ENCODE measurements at regions of chr9 and their contacts with region 1.

Region 1: DNA sequence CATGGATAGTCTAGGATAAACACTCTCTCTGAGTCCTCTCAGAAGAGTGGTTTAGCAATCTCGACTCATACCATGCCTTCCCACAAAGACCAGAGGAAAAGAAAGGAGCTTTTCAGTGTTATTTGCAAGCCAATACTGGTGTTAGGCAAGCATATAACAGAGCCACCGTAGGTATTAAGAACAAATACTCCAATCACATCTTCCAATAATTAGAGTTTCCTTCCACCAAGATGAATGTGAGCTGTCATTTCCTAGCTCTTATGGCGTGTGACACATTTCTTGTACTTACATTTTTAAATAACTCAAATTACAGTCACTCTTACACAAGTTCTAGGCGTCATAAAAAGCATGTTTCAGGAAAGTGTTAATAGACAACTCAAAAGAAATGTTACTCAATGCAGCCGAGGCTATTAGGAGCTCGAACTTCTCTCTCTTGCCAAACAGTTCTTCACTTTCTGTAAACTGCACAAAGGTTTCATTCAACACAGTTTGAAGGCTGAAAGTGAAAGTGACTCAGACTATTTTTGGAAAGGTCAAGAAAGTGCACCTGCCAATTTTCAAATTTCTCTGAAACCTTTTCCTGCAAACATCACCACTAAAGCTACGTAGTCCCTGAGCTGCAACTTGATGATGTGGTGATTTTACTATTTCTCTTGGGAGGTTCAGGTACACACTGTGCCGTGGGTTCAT is 153.8 kb downstream of the AUH start:
- DNase-seq: no peak
- H3K4me3 Mint-ChIP-seq: peak overlapping the region; percentile 68
- H3K27ac Mint-ChIP-seq: peak overlapping the region; percentile 95
- H3K4me1 Mint-ChIP-seq: peaks cover 59% of the 10 kb centered on the region
- H3K27me3 Mint-ChIP-seq: no peaks in the 10 kb centered on the region

Region 2: GRCh38 chr9:91101611-91102168 is 106.2 kb before region 1 on chr9:
- intact Hi-C with region 1: loop called (anchors 1 kb)
- DNase-seq: peak; percentile 85
- H3K4me3 Mint-ChIP-seq: peak overlapping the region; percentile 53
- H3K27ac Mint-ChIP-seq: peak overlapping the region; percentile 85
- H3K4me1 Mint-ChIP-seq: peaks cover 72% of the 10 kb centered on the region
- H3K27me3 Mint-ChIP-seq: peaks cover 8% of the 10 kb centered on the region

Region 3: DNA sequence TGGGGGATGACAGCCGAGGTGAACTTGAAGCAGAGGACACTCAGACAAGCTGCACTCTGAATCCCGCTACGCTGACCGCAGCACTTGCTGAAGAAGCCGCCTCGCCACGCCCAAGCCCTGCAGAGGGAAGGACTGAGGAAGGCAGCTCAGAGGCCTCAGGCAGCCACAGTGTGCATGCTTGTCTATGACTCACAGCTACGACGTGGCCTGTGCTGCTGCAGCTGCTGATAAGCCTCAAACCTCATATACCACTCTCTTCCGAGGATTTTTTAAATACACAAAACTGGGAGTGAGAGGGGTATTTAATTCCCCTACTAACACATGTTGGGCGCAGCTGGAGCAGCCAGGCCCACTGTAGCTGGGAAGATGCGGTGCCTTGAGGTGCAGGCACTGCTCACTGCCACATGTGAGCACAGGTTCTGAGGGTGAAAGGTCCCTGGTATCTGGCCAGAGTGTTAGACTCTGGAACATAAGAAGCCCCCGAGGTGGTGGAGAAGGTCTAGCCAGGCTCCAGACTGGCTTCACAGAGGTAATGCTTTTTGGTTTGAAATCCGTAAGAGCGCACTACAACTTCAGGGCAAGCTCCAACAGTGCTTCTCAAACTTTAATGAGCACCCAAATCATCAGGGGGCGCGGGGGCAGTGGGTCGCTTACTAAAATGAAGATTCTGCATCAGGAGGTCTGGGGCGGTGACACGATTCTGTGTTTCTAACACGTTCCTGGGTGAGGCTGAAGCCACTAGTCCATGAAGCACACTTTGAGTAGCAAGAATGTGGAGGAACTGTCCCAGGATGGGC is 43.0 kb before region 1 on chr9:
- intact Hi-C with region 1: loop called (anchors 1 kb)
- DNase-seq: peak; percentile 74
- H3K4me3 Mint-ChIP-seq: peak overlapping the region; percentile 82
- H3K27ac Mint-ChIP-seq: peak overlapping the region; percentile 98
- H3K4me1 Mint-ChIP-seq: peaks cover 62% of the 10 kb centered on the region
- H3K27me3 Mint-ChIP-seq: no peaks in the 10 kb centered on the region

Region 4: DNA sequence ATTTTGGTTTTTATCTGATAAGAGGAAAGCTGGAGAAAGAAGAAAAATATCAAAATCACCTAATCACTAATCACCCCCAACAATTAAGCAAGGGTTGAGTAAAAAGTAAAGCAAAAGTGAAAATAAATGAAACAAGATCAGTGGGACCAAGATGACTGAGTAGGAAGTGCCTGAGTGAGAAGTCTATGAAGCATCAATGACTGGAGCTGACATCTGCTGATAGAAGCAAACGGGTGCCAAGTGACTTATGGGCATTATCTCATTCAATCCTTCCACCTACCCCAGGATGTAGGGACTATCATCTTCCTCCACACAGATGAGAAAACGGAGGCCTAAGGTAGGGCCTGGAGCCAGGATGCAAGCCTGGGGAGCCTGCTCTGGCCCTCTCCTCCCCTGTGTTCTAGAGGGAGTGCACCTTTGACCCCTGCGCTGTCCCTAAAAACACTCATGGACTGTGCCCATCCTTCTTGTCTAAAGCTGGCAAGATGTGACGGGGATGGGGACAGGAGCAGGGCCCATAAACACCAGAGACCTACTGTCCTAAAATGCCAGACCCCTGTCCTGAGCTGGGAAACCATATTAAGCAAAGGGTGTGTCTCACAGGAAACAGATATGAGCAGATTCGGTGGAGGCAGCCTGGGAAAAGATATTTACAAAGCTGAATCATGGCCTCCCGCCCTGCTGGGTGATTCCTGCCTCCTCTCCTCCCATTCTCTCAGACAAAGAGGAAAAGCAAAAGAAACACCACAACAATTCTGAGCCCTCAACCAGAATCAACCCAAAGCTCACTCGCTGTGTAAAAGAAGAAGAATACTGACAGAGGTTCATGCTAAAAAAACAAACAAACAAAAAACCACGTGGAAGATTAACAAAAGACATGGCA is 37.8 kb after region 1 on chr9:
- intact Hi-C with region 1: loop called (anchors 1 kb)
- DNase-seq: peak; percentile 6
- H3K4me3 Mint-ChIP-seq: no peak overlapping the region
- H3K27ac Mint-ChIP-seq: peak overlapping the region; percentile 79
- H3K4me1 Mint-ChIP-seq: peaks cover 56% of the 10 kb centered on the region
- H3K27me3 Mint-ChIP-seq: no peaks in the 10 kb centered on the region

Region 5: GRCh38 chr9:91346652-91347051 is 138.8 kb after region 1 on chr9:
- intact Hi-C with region 1: loop called (anchors 1 kb)
- DNase-seq: no peak
- H3K4me3 Mint-ChIP-seq: no peak overlapping the region
- H3K27ac Mint-ChIP-seq: peak overlapping the region; percentile 67
- H3K4me1 Mint-ChIP-seq: peaks cover 56% of the 10 kb centered on the region
- H3K27me3 Mint-ChIP-seq: no peaks in the 10 kb centered on the region

Region 6: DNA sequence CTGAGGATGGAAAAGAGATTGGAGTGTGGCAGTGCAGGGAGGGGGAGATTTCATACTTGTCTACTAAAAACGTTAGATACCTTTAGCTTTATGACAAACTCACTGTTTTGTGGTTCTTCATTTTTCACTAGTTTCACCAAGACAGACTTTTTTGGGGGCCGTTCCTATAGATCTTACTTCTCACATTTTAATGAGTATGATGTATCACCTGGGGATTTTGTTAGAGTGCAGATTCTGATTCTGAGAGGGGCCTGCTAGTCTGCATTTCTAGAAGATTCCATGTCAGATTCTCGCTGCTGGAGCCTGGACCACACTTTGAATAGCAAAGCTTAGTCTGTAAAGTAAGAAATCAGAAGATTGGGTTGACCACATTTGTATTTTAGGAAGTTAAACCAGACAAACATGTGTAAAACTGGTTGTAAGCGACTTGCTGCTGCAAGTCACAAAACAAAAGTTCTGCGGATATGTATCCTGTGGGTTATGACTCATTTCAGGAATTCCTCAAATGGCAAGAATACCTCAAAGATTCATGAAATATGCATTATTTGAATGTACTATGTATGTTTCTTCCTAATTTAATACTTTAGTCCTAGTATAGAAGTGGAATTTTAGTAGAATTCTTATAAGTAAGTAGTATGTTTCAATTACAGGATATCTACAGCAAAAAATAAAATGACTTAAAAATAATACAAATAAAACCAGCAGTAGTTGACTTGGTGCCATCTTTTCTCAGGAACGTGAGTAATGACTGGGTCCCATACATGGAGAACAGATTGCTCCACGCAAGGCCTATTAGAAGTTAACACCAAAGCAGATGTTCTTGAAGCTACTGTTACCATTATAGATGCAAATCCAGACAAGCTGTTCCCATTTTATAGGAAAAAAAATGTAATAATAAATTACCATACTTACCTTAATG is 187.9 kb after region 1 on chr9:
- intact Hi-C with region 1: loop called (anchors 1 kb)
- DNase-seq: peak; percentile 33
- H3K4me3 Mint-ChIP-seq: peak overlapping the region; percentile 73
- H3K27ac Mint-ChIP-seq: peak overlapping the region; percentile 84
- H3K4me1 Mint-ChIP-seq: peaks cover 21% of the 10 kb centered on the region
- H3K27me3 Mint-ChIP-seq: peaks cover 11% of the 10 kb centered on the region

Measured in activated T-helper 1 cell treated with anti-CD3 and anti-CD28 coated beads, Interleukin-12 subunit alpha, Interleukin-12 subunit beta, Interleukin-2, Interleukin-4 antibody, amounts not matched to agents 30 ng/mL and 10 ng/mL and 1 ng/mL, durations not matched to agents 14 hours and 24 hours and 36 hours (primary cell).